Activated B cell treated with CpG ODN at 0.5 μM for 24 hours (primary cell): ENCODE measurements at regions of chr22 and their contacts with region 1.

Region 1: GRCh38 chr22:39622881-39623367 is 52.4 kb downstream of the CACNA1I start:
- DNase-seq: peak; percentile 58
- ATAC-seq: peak; percentile 64
- H3K4me3 Mint-ChIP-seq: no peak overlapping the region
- H3K27ac Mint-ChIP-seq: no peak overlapping the region
- H3K4me1 Mint-ChIP-seq: peaks cover 2% of the 10 kb centered on the region
- H3K27me3 Mint-ChIP-seq: peaks cover 30% of the 10 kb centered on the region
- CTCF ChIP-seq: no peak

Region 2: DNA sequence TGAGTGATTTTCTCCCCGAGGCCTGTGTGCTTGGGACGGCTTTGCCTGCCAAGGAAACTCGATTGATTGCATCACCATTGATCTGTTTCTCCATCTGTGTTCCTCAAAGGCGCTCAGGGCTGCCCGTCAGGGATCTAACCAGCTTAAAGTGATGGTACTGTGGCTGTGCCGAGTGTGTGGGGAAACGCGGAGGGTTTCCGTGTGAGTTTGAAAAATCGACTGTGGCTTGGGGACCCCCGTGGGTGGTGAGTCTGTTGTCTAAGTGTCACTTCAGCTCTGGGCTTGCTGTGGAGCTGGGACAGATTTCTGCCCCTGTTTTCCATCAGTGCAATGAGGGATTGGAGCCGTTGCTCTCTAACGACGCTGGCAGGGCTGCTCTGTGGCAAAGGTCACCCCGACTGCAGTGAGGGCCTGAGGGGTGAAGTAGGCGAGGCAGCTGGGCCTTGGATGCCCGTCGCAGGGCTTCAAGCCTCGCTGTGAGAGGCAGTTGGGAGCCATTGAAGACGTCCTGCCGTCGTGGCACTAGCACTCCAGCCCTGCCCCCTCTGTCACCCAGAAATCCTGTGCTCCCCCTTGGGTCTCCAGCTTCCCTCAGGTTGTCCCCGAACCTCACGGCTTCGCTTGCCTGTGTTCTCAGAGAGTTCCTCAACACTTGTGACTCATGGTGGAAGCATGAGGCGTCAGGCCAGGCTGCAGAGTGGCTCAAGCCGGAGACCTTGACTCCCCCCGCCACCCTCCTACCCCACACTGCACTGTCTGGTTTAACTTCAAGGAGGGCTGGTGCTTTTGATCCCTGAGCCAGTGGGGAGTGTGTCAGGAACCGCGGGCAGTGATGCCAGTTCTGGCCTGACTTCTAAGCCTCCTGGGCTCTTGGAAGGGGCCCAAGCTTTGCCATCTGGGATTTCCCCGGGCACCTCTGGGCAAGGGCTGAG is 30.5 kb before region 1 on chr22:
- CTCF ChIA-PET with region 1: no interaction called
- POLR2A ChIA-PET with region 1: no interaction called
- intact Hi-C with region 1: no loop called
- DNase-seq: no peak
- ATAC-seq: no peak
- H3K4me3 Mint-ChIP-seq: no peak overlapping the region
- H3K27ac Mint-ChIP-seq: no peak overlapping the region
- H3K4me1 Mint-ChIP-seq: peaks cover 2% of the 10 kb centered on the region
- H3K27me3 Mint-ChIP-seq: peaks cover 26% of the 10 kb centered on the region
- CTCF ChIP-seq: no peak

Region 3: GRCh38 chr22:39943337-39943736 is 320.4 kb after region 1 on chr22:
- CTCF ChIA-PET with region 1: interaction called, 3 read pairs
- POLR2A ChIA-PET with region 1: no interaction called
- intact Hi-C with region 1: loop called (anchors 1 kb)
- DNase-seq: no peak
- ATAC-seq: no peak
- H3K4me3 Mint-ChIP-seq: no peak overlapping the region
- H3K27ac Mint-ChIP-seq: no peak overlapping the region
- H3K4me1 Mint-ChIP-seq: peaks cover 71% of the 10 kb centered on the region
- H3K27me3 Mint-ChIP-seq: no peaks in the 10 kb centered on the region
- CTCF ChIP-seq: no peak